Activated CD4-positive, alpha-beta T cell treated with anti-CD3 and anti-CD28 coated beads, Interleukin-2, amount 10 ng/mL, durations not matched to agents 24 days and 14 days (primary cell): ENCODE measurements at regions of chr7 and their contacts with region 1.

Region 1: DNA sequence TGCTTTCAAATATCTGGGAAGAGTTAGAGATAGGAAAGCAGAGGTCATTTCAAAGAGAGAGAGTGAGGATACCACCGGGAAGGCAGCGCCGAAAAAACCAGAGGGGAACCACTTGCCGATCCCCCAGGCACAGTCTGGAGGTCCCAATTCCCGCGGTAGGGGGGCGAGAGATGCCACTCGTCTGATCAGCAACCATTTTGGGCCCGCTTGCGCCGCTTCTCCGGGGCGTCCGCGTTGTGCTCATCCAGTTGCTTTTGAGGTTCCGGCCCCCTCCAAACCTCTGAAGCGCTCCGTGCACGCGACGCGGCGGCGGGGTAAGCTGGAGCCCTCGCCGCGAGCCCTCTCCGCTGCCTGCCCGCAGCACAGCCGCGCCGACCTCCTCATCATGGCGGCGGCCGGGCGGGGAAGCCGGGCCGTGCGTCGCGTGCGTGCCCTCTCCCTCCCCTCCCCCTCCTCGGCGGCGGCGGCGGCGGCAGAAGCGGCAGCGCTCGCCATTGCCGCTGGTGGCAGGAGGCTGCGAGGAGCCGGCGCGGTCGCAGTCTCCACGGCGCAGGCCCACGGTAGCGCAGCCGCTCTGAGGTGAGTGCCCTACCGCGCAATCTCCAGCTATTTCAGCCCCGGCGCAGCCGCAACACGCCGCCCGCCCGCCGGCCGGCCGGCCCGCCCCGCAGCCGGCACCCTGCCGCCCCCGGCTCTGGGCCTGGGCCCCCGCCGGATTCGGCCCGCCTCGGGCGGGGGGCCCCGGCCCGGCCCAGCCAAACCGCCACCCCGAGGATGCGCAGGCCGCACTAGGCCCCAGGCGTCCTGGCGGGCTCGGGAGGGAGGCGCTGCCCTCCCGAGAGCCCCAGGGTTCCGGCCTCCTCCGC is at the start of gene NRF1:
- DNase-seq: peak; percentile 98
- H3K4me3 Mint-ChIP-seq: peak within 1 kb of the TSS; percentile 93
- H3K27ac Mint-ChIP-seq: peak within 1 kb of the TSS; percentile 95
- H3K4me1 Mint-ChIP-seq: peaks cover 46% of the 10 kb centered on the region
- H3K27me3 Mint-ChIP-seq: no peaks in the 10 kb centered on the region
- total RNA-seq, gene NRF1: 22.3 and 23.2 TPM in 2 replicates

Region 2: DNA sequence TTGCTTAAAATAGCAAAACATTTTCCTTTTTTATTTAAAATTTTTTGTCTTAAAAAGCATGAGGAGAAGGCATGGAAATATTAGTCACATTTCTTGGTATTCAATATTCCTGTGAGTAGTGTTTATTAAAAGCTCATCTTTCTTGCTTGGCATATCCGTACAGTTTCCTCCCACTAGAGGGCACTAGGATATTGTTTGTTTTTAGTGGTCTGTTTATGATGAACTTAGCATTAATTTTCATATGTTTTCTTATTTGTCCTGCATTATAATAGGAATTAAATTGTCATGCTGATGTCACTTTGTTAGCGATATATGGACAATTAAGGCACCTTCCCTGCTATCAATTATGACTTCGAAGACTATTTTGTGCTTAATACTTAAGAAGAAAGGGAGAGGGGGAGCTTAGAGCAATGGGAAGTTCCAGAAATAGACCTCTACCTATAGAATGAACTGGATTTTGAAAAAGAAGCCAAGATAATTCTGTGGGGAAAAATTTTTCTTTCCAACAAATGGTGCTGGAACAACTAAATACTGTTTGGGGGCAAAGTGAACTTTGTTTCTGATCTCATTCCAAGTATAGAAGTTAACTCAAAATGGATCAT is 268.3 kb before region 1 on chr7:
- intact Hi-C with region 1: loop called (anchors 5 kb)
- DNase-seq: peak; percentile 76
- H3K4me3 Mint-ChIP-seq: no peak overlapping the region
- H3K27ac Mint-ChIP-seq: no peak overlapping the region
- H3K4me1 Mint-ChIP-seq: peaks cover 37% of the 10 kb centered on the region
- H3K27me3 Mint-ChIP-seq: no peaks in the 10 kb centered on the region

Region 3: GRCh38 chr7:129494041-129494440 is 117.4 kb before region 1 on chr7:
- intact Hi-C with region 1: loop called (anchors 2 kb)
- DNase-seq: peak; percentile 78
- H3K4me3 Mint-ChIP-seq: no peak overlapping the region
- H3K27ac Mint-ChIP-seq: peak overlapping the region; percentile 83
- H3K4me1 Mint-ChIP-seq: peaks cover 29% of the 10 kb centered on the region
- H3K27me3 Mint-ChIP-seq: no peaks in the 10 kb centered on the region

Region 4: DNA sequence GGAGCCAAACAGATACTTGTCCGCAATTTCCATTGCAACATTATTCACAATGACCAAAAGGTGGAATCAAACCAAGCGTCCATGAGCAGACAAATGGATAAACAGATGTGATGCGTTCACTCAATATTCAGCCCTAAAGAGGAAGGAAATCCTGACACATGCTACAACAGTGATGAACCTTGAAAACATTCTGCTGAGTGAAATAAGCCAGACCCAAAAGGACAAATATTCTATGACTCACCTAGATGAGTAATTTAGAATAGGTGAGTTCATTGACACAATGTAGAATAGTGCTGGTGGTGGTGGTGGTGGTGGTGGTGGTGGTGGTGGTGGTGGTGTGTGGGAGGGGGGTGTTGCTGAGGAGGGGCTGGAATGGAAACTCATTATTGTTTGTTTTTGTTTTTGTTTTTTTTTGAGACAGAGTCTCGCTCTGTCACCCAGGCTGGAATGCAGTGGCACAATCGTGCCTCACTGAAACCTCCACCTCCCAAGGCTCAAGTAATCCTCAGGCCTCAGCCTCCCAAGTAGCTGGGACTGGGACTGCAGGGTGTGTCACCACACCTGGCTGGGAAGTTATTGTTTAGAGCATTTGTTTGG is 80.6 kb before region 1 on chr7:
- intact Hi-C with region 1: loop called (anchors 2 kb)
- DNase-seq: peak; percentile 61
- H3K4me3 Mint-ChIP-seq: no peak overlapping the region
- H3K27ac Mint-ChIP-seq: peak overlapping the region; percentile 76
- H3K4me1 Mint-ChIP-seq: peaks cover 11% of the 10 kb centered on the region
- H3K27me3 Mint-ChIP-seq: peaks cover 5% of the 10 kb centered on the region

Region 5: GRCh38 chr7:129626896-129627295 is 15.4 kb after region 1 on chr7:
- intact Hi-C with region 1: no loop called
- DNase-seq: no peak
- H3K4me3 Mint-ChIP-seq: no peak overlapping the region
- H3K27ac Mint-ChIP-seq: no peak overlapping the region
- H3K4me1 Mint-ChIP-seq: peaks cover 14% of the 10 kb centered on the region
- H3K27me3 Mint-ChIP-seq: no peaks in the 10 kb centered on the region

Region 6: DNA sequence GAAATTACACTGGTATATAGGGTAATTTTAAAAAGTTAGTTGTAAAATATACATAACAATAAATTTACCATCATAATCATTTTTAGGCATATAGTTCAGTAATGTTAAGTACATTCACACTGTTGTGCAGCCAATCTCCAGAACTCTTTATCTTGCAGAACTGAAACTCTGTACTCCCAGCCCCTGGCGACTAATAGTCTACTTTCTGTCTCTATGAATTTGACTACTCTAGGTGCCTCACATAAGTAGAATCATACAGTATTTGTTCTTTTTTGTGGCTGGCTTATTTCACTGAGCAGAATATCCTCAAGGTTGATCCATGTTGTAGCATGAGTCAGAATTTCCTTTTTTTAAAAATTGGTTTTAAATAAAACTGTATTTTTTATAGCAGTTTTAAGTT is 41.4 kb after region 1 on chr7:
- intact Hi-C with region 1: loop called (anchors 5 kb)
- DNase-seq: no peak
- H3K4me3 Mint-ChIP-seq: no peak overlapping the region
- H3K27ac Mint-ChIP-seq: no peak overlapping the region
- H3K4me1 Mint-ChIP-seq: peaks cover 22% of the 10 kb centered on the region
- H3K27me3 Mint-ChIP-seq: no peaks in the 10 kb centered on the region